ENCODE measurements at regions of chr12 and their contacts with region 1.

Region 1: GRCh38 chr12:43805860-43806736 is at the start of gene TWF1:
- DNase-seq: peak; percentile 95
- H3K4me3 ChIP-seq: peak within 1 kb of the TSS; percentile 94 to 96
- H3K27ac ChIP-seq: peak within 1 kb of the TSS; percentile 95 to 98
- H3K4me1 ChIP-seq: peaks cover 0 to 11% of the 10 kb centered on the region in 2 experiments; a peak in 2 of 4 replicates
- H3K27me3 ChIP-seq: no peaks in the 10 kb centered on the region
- CTCF ChIP-seq: peak; percentile 43
- EP300 ChIP-seq: no peak
- RAD21 ChIP-seq: no peak
- polyA plus RNA-seq, gene TWF1: 36.9 and 51.7 TPM in 2 replicates

Region 2: GRCh38 chr12:43776498-43776897 is 29.6 kb before region 1 on chr12:
- CTCF ChIA-PET with region 1: interaction called, 13 read pairs
- POLR2A ChIA-PET with region 1: interaction called, 3 read pairs
- DNase-seq: peak; percentile 61
- H3K4me3 ChIP-seq: no peak overlapping the region
- H3K27ac ChIP-seq: no peak overlapping the region
- H3K4me1 ChIP-seq: no peaks in the 10 kb centered on the region
- H3K27me3 ChIP-seq: no peaks in the 10 kb centered on the region
- CTCF ChIP-seq: peak; percentile 61
- EP300 ChIP-seq: no peak
- RAD21 ChIP-seq: peak; percentile 72

Region 3: GRCh38 chr12:43816168-43816567 is 10.1 kb after region 1 on chr12:
- CTCF ChIA-PET with region 1: interaction called, 11 read pairs
- POLR2A ChIA-PET with region 1: interaction called, 3 read pairs
- DNase-seq: no peak
- H3K4me3 ChIP-seq: no peak overlapping the region
- H3K27ac ChIP-seq: no peak overlapping the region
- H3K4me1 ChIP-seq: no peaks in the 10 kb centered on the region
- H3K27me3 ChIP-seq: no peaks in the 10 kb centered on the region; the same call in 1 of the 2 replicates
- CTCF ChIP-seq: no peak
- EP300 ChIP-seq: no peak
- RAD21 ChIP-seq: no peak

Region 4: GRCh38 chr12:43835656-43836474 is 29.8 kb after region 1 on chr12 and contains the start of gene TMEM117:
- CTCF ChIA-PET with region 1: interaction called, 5 read pairs
- POLR2A ChIA-PET with region 1: interaction called, 16 read pairs
- DNase-seq: peak; percentile 86
- H3K4me3 ChIP-seq: peak within 1 kb of the TSS; percentile 73 to 80
- H3K27ac ChIP-seq: peak within 1 kb of the TSS; percentile 65 to 84
- H3K4me1 ChIP-seq: peaks cover 0 to 9% of the 10 kb centered on the region in 2 experiments; a peak in 2 of 4 replicates
- H3K27me3 ChIP-seq: no peaks in the 10 kb centered on the region
- CTCF ChIP-seq: no peak
- EP300 ChIP-seq: no peak
- RAD21 ChIP-seq: no peak
- polyA plus RNA-seq, gene TMEM117: 0.81 and 1.0 TPM in 2 replicates

Measured in SK-N-SH (cell line).